AG04449 (cell line): ENCODE measurements at regions of chr19 and their contacts with region 1.

Region 1: DNA sequence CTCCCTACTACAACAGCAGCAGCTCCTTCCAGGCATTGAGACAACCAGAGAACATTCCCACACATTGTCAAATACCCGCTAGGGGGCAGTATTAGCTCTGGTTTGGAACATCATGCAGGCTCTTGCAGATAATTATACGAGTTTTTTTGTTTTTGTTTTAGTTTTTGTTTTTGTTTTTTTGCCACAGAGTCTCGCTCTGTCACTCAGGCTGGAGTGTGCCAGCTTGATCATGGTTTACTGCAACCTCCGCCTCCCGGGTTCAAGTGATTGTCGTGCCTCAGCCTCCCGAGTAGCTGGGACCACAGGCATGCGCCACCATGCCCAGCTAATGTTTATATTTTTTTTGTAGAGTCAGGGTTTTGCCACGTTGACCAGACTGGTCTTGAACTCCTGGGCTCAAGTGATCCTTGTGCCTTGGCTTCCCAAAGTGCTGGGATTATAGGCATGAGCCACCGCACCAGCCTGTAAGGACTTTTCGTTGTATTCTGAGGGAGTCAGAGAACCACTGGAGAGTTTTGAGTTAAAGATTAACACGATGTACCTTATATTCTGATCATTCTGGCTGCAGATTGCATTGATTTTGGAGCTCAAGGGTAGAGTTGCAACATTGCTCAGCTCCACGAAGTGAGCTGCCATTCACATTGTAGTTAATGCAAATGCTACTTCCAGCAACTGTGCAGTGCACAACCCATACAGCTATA is 41.7 kb upstream of the CEACAM20 start:
- DNase-seq: peak; percentile 34
- H3K4me3 ChIP-seq: no peak overlapping the region
- CTCF ChIP-seq: peak; percentile 54

Region 2: DNA sequence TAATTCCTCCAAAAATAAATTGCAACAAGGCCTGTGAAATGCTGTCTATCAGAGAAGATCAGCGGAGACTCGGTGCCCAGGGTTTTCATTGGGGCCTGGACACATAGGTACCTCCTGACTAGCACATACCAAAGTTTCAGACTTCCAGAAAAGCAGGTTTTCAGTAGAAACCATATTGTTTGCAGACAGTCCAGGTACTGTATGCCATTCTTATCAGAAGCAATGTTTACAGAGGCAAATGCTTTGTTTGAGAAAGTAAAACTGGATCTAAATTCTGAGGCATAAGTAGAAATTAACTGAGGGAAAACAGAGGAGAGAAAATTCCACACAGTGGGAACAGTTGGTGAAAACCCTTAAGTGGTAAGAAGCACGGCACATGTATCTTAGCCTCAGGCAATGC is 135.7 kb before region 1 on chr19:
- CTCF ChIA-PET with region 1: no interaction called
- POLR2A ChIA-PET with region 1: no interaction called
- DNase-seq: no peak
- H3K4me3 ChIP-seq: no peak overlapping the region
- CTCF ChIP-seq: no peak

Region 3: DNA sequence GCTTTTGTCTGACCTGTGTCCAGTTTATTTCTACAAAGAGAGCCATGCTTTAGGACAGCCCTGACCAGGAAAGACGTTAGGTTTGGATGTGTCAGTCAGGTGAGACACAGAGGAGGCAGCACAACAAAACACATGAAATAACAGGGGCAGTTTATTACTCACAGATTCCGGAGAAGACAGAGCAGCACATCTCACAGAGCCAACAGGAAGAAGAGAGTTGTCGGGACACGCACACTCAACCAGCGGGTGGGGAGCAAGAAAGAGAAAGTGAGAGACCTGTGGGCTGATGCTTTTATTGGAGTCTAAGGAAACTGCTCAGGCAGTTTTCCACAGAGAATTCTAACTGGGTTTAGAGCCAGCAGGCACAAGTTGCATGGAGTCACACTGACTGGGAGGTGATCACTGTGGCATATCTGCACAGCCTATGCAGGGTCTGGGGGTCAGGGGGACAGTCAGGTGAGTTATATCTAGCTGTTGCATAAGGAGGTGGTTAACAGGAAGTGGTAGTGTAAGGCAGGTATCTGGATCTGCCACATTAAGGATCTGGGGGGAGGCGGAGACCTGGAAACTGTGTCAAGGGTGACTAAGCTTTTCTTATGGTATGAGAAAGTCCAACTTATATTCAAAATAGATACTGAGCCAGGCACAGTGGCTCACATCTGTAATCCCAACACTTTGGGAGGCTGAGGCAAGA is 17.5 kb before region 1 on chr19:
- CTCF ChIA-PET with region 1: interaction called, 16 read pairs
- POLR2A ChIA-PET with region 1: no interaction called
- DNase-seq: no peak
- H3K4me3 ChIP-seq: no peak overlapping the region
- CTCF ChIP-seq: no peak

Region 4: DNA sequence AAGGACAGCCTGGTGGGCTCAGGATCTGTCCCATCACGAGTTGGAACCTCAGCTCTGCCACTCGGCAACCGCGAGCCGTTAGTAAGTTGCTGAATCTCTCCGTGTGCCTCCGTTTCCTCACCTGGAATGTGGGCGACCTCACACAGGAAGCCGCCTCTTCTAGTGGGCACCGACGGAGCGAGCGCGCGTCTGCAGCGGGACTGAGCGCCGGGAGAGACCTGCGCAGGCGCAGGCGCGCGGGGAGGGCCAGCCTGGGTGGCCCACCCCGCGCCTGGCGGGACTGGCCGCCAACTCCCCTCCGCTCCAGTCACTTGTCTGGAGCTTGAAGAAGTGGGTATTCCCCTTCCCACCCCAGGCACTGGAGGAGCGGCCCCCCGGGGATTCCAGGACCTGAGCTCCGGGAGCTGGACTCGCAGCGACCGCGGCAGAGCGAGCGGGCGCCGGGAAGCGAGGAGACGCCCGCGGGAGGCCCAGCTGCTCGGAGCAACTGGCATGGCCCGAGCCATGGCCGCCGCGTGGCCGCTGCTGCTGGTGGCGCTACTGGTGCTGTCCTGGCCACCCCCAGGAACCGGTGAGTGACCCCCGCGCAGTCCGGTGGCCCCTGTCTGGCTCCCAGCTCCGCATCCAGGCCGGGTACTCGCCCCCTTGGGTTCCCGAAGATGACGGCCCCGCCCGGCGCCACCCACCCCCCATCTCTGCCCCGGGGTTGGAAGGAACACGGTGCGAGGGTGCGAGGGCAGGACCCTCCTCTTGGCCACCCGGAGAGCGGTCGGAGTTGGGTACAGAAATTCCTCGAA is 72.7 kb after region 1 on chr19 and contains the start of gene PVR:
- CTCF ChIA-PET with region 1: interaction called, 11 read pairs
- POLR2A ChIA-PET with region 1: no interaction called
- DNase-seq: no peak
- H3K4me3 ChIP-seq: peak within 1 kb of the TSS; percentile 90
- CTCF ChIP-seq: no peak

Region 5: GRCh38 chr19:44662691-44663385 is 91.7 kb after region 1 on chr19:
- CTCF ChIA-PET with region 1: interaction called, 121 read pairs
- POLR2A ChIA-PET with region 1: no interaction called
- DNase-seq: no peak
- H3K4me3 ChIP-seq: no peak overlapping the region
- CTCF ChIP-seq: no peak

Region 6: DNA sequence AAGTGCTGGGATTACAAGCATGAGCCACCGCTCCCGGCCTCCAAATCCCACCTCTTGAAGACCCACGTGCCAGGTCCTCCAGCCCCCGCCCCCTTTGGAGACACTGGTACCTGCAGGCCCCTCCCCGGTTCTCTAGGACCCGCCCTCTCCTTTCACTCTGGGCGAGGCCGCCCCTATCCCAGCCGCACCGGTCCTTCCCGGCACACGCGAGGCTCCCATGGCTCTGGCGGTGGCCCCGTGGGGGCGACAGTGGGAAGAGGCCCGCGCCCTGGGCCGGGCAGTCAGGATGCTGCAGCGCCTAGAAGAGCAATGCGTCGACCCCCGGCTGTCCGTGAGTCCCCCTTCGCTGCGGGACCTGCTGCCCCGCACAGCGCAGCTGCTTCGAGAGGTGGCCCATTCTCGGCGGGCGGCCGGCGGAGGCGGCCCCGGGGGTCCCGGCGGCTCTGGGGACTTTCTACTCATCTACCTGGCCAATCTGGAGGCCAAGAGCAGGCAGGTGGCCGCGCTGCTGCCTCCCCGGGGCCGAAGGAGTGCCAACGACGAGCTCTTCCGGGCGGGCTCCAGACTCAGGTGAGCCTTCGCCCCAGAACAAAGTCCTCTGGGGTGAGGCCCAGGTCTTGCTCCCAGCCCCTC is 206.7 kb after region 1 on chr19 and contains the start of gene CBLC:
- CTCF ChIA-PET with region 1: interaction called, 11 read pairs
- POLR2A ChIA-PET with region 1: no interaction called
- DNase-seq: no peak
- H3K4me3 ChIP-seq: no peak within 1 kb of the TSS
- CTCF ChIP-seq: no peak